OCI-LY7 (cell line): ENCODE measurements at regions of chr14 and their contacts with region 1.

Region 1: GRCh38 chr14:42429009-42429800 is 822.5 kb downstream of the LRFN5 start:
- DNase-seq: peak; percentile 75
- H3K4me3 ChIP-seq: peak overlapping the region; percentile 16
- H3K27ac ChIP-seq: peak overlapping the region; percentile 74
- H3K4me1 ChIP-seq: peaks cover 22% of the 10 kb centered on the region
- CTCF ChIP-seq: no peak

Region 2: DNA sequence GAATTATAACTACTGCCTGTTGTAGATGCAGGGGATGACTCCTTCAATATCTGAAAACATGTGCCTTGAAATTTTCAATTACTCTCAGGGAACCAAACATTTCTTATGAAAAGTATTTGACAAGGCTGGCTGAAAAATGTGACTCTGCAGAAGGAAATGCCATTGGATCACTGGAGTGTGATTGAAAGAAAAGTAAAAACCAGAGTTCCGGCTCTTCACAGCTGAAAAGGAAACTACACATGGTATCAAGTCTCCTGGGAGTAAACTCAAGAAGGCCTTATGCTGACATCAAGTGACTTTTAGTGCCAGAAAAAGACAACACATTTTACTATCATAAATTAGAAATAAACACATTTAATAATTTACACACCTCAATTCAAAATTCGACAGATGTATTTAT is 129.5 kb before region 1 on chr14:
- CTCF ChIA-PET with region 1: no interaction called
- POLR2A ChIA-PET with region 1: no interaction called
- intact Hi-C with region 1: no loop called
- DNase-seq: peak; percentile 94
- H3K4me3 ChIP-seq: peak overlapping the region; percentile 50
- H3K27ac ChIP-seq: peak overlapping the region; percentile 82
- H3K4me1 ChIP-seq: peaks cover 25% of the 10 kb centered on the region
- CTCF ChIP-seq: no peak

Region 3: DNA sequence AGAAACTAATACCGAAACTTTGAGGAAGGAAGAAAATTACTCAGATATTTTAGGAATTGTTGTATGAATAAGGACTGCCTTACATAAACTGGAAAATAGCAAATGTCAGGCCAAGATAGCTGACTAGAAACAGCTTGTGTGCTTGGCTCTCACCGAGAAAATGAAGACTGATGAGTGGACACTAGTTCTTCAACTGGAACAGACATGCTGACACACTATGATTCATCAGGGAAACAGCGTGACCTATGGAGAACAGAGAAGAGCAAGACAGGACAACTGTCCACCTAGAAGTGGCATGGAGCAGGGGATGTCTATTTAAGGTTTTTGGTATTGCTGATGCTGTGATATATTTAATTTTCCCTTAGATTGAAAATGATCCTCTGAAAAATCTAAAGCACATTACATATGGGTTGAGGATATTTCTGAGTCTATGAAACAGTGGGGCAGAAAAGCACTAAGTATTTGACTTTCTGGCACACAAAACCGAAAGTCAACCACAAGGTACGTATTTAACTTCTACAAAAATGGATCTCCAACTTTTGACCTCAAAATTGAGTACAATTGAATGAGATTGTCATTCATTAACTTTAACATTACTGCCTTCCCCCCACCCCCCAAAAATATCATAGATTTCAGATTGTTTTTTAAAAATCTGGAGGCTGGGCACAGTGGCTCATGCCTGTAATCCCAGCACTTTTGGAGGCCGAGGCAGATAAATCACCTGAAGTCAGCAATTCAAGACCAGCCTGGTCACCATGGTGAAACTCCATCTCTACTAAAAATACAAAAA is 40.6 kb after region 1 on chr14:
- CTCF ChIA-PET with region 1: no interaction called
- POLR2A ChIA-PET with region 1: interaction called, 10 read pairs
- intact Hi-C with region 1: no loop called
- DNase-seq: no peak
- H3K4me3 ChIP-seq: no peak overlapping the region
- H3K27ac ChIP-seq: no peak overlapping the region
- H3K4me1 ChIP-seq: no peaks in the 10 kb centered on the region
- CTCF ChIP-seq: no peak

Region 4: GRCh38 chr14:42545636-42546035 is 116.4 kb after region 1 on chr14:
- CTCF ChIA-PET with region 1: no interaction called
- POLR2A ChIA-PET with region 1: no interaction called
- intact Hi-C with region 1: no loop called
- DNase-seq: no peak
- H3K4me3 ChIP-seq: no peak overlapping the region
- H3K27ac ChIP-seq: no peak overlapping the region
- H3K4me1 ChIP-seq: no peaks in the 10 kb centered on the region
- CTCF ChIP-seq: no peak